MCF 10A (cell line): ENCODE measurements at regions of chr10 and their contacts with region 1.

Region 1: GRCh38 chr10:23535381-23535780 is 96.5 kb downstream of the OTUD1 start:
- DNase-seq: no peak
- H3K4me3 Mint-ChIP-seq: no peak overlapping the region
- H3K27ac Mint-ChIP-seq: no peak overlapping the region
- H3K4me1 Mint-ChIP-seq: peaks cover 7% of the 10 kb centered on the region
- H3K27me3 Mint-ChIP-seq: peaks cover 19% of the 10 kb centered on the region
- CTCF ChIP-seq: peak; percentile 20

Region 2: GRCh38 chr10:23035569-23035968 is 499.8 kb before region 1 on chr10:
- CTCF ChIA-PET with region 1: no interaction called
- POLR2A ChIA-PET with region 1: no interaction called
- intact Hi-C with region 1: no loop called
- DNase-seq: peak; percentile 22
- H3K4me3 Mint-ChIP-seq: no peak overlapping the region
- H3K27ac Mint-ChIP-seq: no peak overlapping the region
- H3K4me1 Mint-ChIP-seq: no peaks in the 10 kb centered on the region
- H3K27me3 Mint-ChIP-seq: peaks cover 16% of the 10 kb centered on the region
- CTCF ChIP-seq: no peak

Region 3: DNA sequence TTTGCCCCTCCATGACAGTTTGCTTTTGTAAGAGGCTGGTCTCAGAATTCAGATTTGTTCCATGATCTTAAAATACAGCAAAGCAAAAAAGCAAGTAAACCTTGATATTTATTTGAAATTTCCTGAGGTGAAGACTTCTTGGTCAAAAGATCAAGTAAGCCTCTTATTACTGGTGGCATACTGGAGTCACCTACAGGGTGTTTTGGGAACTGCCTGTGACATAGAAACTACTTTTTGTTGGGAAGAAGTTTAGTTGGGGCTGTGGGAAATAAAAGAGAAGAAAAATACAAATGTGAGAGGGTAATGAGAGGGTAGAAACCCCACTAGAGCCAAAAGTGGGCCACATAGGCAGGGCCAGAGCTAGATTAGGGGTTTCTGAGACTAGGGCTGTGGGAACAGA is 121.4 kb after region 1 on chr10:
- CTCF ChIA-PET with region 1: interaction called, 4 read pairs
- POLR2A ChIA-PET with region 1: no interaction called
- intact Hi-C with region 1: loop called (anchors 1 kb)
- DNase-seq: peak; percentile 26
- H3K4me3 Mint-ChIP-seq: no peak overlapping the region
- H3K27ac Mint-ChIP-seq: no peak overlapping the region
- H3K4me1 Mint-ChIP-seq: no peaks in the 10 kb centered on the region
- H3K27me3 Mint-ChIP-seq: peaks cover 64% of the 10 kb centered on the region
- CTCF ChIP-seq: peak; percentile 60